Heart right ventricle (tissue), 16 donors: ENCODE measurements at regions of chr9 and their contacts with region 1.

Region 1: GRCh38 chr9:34252670-34253459 is 74.0 kb downstream of the UBAP1 start:
- DNase-seq: peak; percentile 45 to 78
- ATAC-seq: peak; percentile 49 to 75 (median 54)
- H3K4me3 ChIP-seq: no peak overlapping the region
- H3K27ac ChIP-seq: peak overlapping the region; percentile 36 to 84 (median 74)
- H3K4me1 ChIP-seq: peaks cover 21 to 78% (median 60%) of the 10 kb centered on the region in 9 donors
- H3K27me3 ChIP-seq: no peaks in the 10 kb centered on the region
- CTCF ChIP-seq: peak; percentile 45 to 95 (median 93)

Region 2: GRCh38 chr9:33924978-33925797 is 327.7 kb before region 1 on chr9:
- intact Hi-C with region 1: loop called in 1 of 10 experiments (anchors 10 kb)
- DNase-seq: peak in 1 of 2 donors; percentile 65
- ATAC-seq: peak in 7 of 8 donors; percentile 53 to 76 (median 70)
- H3K4me3 ChIP-seq: no peak overlapping the region
- H3K27ac ChIP-seq: peak overlapping the region in 8 of 10 donors; percentile 16 to 65 (median 23)
- H3K4me1 ChIP-seq: peaks cover 5 to 47% (median 24%) of the 10 kb centered on the region in 9 donors
- H3K27me3 ChIP-seq: no peaks in the 10 kb centered on the region
- CTCF ChIP-seq: peak; percentile 29 to 79 (median 66)

Region 3: DNA sequence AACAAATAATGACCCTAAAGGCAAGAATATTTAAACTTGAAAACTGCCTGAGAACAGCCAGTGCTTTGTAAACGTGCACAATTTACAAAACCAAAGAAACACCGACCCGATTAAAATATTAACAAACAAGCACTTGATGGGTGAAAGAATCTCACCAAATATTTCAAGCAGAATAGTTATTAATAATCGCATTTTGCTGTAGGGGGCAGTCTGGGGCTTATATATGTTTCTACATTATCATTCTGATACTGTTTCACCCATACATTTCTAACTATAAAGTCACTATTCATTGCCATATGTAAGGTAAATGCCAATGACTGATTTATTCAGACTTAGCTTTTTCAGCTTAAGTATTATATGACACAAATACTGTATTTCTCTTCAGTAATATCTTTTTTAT is 241.9 kb before region 1 on chr9:
- intact Hi-C with region 1: loop called in 2 of 10 experiments (anchors 10 kb)
- DNase-seq: no peak
- ATAC-seq: no peak
- H3K4me3 ChIP-seq: no peak overlapping the region
- H3K27ac ChIP-seq: no peak overlapping the region
- H3K4me1 ChIP-seq: no peaks in the 10 kb centered on the region
- H3K27me3 ChIP-seq: no peaks in the 10 kb centered on the region
- CTCF ChIP-seq: peak in 6 of 9 donors; percentile 28 to 51 (median 38)

Region 4: DNA sequence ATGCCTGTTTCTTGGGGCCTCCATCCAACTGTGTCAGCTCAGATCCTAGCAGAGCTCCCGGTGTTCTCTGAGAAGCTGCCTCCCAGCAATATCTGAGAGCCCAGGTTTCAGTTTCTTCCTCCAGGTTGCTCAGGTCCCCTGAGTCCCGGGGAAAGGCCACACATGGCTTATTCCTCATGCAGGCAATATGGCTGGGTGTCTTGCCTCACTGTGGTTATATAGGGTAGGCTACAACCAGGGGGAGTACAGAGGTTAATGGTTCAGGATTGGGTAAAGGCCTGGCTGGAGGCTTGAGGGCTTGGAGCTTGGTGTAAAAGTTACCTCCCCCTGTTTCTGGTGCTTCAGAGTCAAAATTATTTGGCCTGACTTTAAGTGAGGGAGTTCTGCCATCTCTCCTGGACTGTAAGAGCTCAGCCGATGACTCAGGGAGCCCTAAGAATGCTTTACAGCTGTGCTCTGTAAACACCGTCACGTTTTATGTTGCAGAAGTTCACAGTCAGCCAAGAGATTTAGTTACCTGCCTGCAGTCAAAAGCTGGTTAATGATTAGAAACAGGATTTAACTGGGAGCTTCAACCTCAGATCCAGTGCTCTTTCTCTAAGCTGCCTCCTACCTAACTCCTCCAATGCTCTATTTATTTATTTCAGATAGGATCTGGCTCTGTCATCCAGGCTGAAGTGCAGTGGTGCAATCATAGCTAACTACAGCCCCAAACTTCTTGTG is 179.8 kb before region 1 on chr9:
- intact Hi-C with region 1: loop called in 1 of 10 experiments (anchors 10 kb)
- DNase-seq: no peak
- ATAC-seq: peak in 4 of 8 donors; percentile 26 to 69 (median 52)
- H3K4me3 ChIP-seq: no peak overlapping the region
- H3K27ac ChIP-seq: peak overlapping the region in 2 of 10 donors; percentile 8 to 10
- H3K4me1 ChIP-seq: peaks cover 0 to 6% (median 0%) of the 10 kb centered on the region in 9 donors
- H3K27me3 ChIP-seq: no peaks in the 10 kb centered on the region
- CTCF ChIP-seq: no peak

Region 5: DNA sequence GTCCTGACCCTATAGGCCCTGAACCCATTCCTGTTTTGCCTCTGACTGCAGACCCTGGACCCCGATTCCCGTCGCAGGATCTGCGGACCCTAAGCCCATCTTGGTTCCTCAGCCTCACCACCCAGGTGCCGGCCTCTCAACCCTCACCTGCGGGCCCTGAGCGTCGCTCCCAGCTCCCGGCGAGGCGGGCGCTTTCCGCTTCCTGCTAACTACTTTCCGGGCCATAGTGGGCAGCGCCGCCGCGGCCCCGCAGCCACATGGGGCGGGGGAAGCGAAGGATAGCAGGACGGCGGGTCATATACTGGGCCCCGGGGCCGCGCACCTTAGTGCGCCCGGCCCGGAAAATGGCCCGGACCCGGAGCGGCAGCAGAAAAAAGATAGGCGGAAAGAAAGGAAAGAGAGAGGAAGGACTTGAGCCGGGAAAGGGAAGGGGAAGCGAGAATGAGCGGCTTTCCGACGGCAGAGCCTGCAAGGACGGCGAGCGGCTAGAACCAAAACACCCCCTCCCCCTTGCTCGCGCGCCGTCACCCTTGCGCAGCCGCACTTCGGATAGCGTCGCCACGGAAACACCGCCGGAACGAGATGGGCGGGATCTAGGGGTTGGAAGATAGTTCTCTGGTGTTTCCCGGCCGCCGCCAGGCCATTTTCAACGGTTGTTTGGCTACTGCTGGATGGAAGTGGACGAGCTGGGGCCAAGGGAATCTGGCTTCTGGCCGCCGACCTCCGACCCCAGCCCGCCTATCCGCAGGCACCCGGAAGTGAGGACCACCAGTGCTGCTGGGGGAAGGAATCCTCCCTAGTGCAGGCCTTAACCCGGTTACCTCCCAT is 126.4 kb before region 1 on chr9 and contains the start of gene DCAF12:
- intact Hi-C with region 1: loop called in 7 of 10 experiments (anchors 1 to 10 kb)
- DNase-seq: peak; percentile 92 to 94
- ATAC-seq: peak; percentile 97 to 99 (median 98)
- H3K4me3 ChIP-seq: peak within 1 kb of the TSS; percentile 64 to 99 (median 84)
- H3K27ac ChIP-seq: peak within 1 kb of the TSS; percentile 48 to 98 (median 90)
- H3K4me1 ChIP-seq: peaks cover 0 to 50% (median 40%) of the 10 kb centered on the region in 9 donors
- H3K27me3 ChIP-seq: no peaks in the 10 kb centered on the region
- CTCF ChIP-seq: peak in 1 of 9 donors; percentile 15
- total RNA-seq, gene DCAF12: 13.8 to 24.2 (median 16.7) TPM

Region 6: GRCh38 chr9:34218446-34218845 is 34.4 kb before region 1 on chr9:
- intact Hi-C with region 1: no loop called
- DNase-seq: no peak
- ATAC-seq: no peak
- H3K4me3 ChIP-seq: no peak overlapping the region
- H3K27ac ChIP-seq: no peak overlapping the region
- H3K4me1 ChIP-seq: peaks cover 0 to 27% (median 8%) of the 10 kb centered on the region in 9 donors
- H3K27me3 ChIP-seq: no peaks in the 10 kb centered on the region
- CTCF ChIP-seq: no peak

Region 7: GRCh38 chr9:34376596-34377403 is 123.9 kb after region 1 on chr9 and contains the start of gene MYORG:
- intact Hi-C with region 1: loop called in 5 of 10 experiments (anchors 2 to 10 kb)
- DNase-seq: peak; percentile 92 to 94
- ATAC-seq: peak; percentile 77 to 89 (median 84)
- H3K4me3 ChIP-seq: peak within 1 kb of the TSS; percentile 55 to 92 (median 80)
- H3K27ac ChIP-seq: peak within 1 kb of the TSS; percentile 35 to 88 (median 75)
- H3K4me1 ChIP-seq: peaks cover 6 to 53% (median 39%) of the 10 kb centered on the region in 9 donors
- H3K27me3 ChIP-seq: peaks cover 0 to 7% (median 0%) of the 10 kb centered on the region in 7 donors
- CTCF ChIP-seq: no peak
- total RNA-seq, gene MYORG: 4.9 to 9.1 (median 7.1) TPM